Brain microvascular endothelial cell (primary cell): ENCODE measurements at regions of chr3 and their contacts with region 1.

Region 1: DNA sequence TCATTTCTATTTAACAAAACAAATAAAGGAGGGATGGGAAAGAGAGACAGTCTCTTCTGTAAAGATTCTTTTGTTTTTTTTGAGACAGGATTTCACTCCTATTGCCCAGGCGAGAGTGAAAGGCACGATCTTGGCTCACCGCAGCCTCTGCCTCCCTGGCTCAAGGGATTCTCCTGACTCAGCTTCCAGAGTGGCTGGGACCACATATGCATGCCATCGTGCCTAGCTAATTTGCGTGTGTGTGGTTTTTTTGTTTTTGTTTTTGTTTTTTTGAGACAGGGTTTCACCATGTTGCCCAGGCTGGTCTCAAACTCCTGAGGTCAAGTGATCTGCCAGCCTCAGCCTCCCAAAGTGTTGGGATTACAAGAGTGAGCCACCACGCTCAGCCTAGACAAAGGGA is 23.3 kb downstream of the STAG1 start:
- DNase-seq: peak; percentile 78
- H3K4me3 ChIP-seq: no peak overlapping the region
- H3K27ac ChIP-seq: peak overlapping the region; percentile 39
- H3K27me3 ChIP-seq: no peaks in the 10 kb centered on the region
- CTCF ChIP-seq: no peak

Region 2: DNA sequence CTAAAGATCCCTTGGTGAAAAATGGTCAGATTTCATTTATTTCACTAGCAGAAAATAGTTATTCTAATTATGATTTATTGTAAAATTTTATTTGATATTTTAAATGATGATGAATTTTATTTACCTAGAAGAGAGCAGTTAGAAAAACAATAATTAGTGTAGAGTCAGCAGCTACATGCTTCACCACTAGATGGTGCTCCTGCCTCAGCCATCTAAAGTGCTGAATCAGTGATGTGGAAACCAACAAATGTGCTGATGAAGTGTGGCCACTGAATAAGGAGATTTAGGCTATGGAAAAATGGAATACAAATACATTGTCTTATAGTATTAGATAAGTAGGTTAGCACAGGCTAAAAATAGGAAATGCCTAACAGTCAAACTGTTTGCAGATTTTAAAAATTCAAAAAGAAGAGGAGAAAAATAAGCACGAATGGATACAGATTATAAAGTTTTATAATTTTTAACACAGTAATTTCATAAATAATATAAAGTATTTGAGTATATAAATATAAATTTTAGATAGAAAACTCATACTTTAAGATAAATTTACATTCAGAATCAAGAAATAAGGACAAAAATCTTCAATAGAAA is 653.6 kb before region 1 on chr3:
- in situ Hi-C with region 1: loop called (anchors 25 kb)
- DNase-seq: peak; percentile 76
- H3K4me3 ChIP-seq: no peak overlapping the region
- H3K27ac ChIP-seq: no peak overlapping the region
- H3K27me3 ChIP-seq: no peaks in the 10 kb centered on the region
- CTCF ChIP-seq: peak; percentile 88

Region 3: DNA sequence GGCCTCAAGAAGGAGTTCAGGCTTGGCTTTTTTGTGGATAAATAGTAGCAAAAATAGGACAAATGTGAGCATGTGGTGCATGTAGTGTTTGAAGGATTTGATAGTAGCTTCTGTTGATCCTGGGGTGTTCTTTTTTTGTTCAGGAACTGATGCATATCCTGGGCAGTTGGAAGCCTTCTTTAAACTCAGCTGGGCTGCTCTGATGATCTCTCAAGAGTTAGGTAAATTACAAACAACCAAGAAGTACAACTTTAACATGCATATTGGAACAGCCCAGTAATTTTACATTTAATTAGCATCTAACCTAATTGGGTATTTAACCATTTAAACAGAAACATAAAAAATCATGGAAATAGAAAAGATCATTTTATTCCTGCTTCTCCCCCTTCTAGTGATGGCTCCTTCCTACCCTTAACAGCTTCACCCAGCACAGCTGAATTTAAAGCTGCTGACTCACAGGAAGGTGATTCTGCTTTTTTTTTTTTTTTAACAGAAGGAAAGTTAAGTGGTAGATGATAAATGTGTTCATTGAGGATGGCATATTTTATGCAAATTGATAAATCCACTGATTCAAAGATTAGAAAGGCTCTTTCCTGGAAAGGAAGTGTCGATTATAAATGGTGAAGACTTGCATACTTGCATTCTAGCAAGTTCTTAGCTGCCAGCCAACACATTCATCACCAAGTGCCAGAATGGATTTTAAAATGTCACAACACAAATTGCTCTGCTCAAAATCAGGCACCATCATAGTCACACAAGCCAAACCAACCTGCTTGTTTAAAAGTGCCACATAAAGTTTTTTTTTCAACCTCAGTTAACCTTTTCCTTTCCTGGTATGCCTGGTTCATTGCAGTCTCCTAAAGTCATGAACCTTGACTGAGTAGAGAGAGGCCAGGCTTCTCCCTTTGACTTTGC is 110.0 kb after region 1 on chr3:
- in situ Hi-C with region 1: no loop called
- DNase-seq: no peak
- H3K4me3 ChIP-seq: no peak overlapping the region
- H3K27ac ChIP-seq: peak overlapping the region; percentile 38
- H3K27me3 ChIP-seq: no peaks in the 10 kb centered on the region
- CTCF ChIP-seq: no peak

Region 4: GRCh38 chr3:136942803-136943202 is 213.9 kb after region 1 on chr3:
- in situ Hi-C with region 1: no loop called
- DNase-seq: no peak
- H3K4me3 ChIP-seq: no peak overlapping the region
- H3K27ac ChIP-seq: no peak overlapping the region
- H3K27me3 ChIP-seq: no peaks in the 10 kb centered on the region
- CTCF ChIP-seq: no peak